Ascending aorta (tissue), 2 donors: ENCODE measurements at regions of chr12 and their contacts with region 1.

Region 1: DNA sequence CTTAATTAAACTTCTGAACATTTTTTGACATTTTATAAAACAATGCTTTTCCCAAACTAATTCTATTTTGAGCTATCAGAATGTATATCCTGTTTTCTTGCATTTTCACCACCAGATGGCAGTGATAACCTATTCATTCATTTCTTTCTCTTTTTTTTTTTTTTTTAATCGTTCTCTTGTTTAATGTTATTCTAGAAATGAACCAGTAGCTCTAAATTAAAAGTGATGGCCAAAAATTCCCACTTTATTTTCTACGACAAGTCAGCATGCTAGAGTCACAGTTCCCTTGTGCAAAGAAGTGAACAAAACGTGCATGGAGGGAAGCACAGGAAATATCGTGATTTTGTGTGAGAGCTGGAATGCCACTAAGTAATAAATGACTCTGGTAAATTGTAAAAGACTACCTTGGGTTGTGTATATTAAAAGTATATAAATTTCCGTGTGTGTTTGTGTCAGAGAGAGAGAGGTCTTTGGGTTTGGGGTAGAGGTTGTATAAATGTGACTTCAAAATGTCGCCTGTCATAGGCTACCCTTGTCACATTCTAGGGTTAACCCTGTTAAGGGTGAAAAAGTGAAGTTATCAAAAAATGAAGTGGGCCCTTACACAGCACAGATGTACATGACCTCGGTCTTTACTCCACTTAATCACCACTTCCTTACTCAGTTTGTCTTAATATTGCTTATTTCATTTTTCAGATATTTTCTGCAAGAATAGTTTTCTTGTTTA is 40.4 kb upstream of the LDHB start:
- DNase-seq: no peak
- H3K4me3 ChIP-seq: peak overlapping the region; percentile 20 to 35
- H3K27ac ChIP-seq: no peak overlapping the region
- H3K4me1 ChIP-seq: peaks cover 0 to 6% of the 10 kb centered on the region in 2 donors
- H3K27me3 ChIP-seq: no peaks in the 10 kb centered on the region
- CTCF ChIP-seq: peak; percentile 16 to 68 (median 64)

Region 2: GRCh38 chr12:21989819-21990412 is 291.8 kb after region 1 on chr12:
- intact Hi-C with region 1: loop called (anchors 1 kb)
- DNase-seq: no peak
- H3K4me3 ChIP-seq: no peak overlapping the region
- H3K27ac ChIP-seq: no peak overlapping the region
- H3K4me1 ChIP-seq: no peaks in the 10 kb centered on the region
- H3K27me3 ChIP-seq: no peaks in the 10 kb centered on the region
- CTCF ChIP-seq: peak; percentile 31 to 62 (median 56)

Region 3: DNA sequence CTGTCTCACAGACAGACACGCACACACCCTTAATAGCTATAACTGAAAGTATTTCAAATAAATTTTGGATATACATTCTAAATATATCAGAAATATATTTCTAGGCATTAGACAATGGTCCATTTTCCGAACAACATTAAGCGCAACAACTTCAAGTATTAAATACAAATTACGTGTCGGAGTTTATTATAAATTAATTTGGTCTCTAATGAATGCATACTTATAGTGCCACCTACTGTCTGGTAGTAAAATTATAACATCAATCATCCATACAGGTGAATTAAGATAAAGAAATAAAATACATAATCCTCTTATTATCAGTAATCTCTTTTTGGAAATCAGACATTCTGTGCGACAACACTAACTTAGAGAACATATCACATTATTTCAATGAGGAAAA is 320.8 kb after region 1 on chr12:
- intact Hi-C with region 1: loop called (anchors 2 kb)
- DNase-seq: no peak
- H3K4me3 ChIP-seq: no peak overlapping the region
- H3K27ac ChIP-seq: no peak overlapping the region
- H3K4me1 ChIP-seq: no peaks in the 10 kb centered on the region
- H3K27me3 ChIP-seq: no peaks in the 10 kb centered on the region
- CTCF ChIP-seq: peak; percentile 5 to 42 (median 35)